Cardiac septum (tissue), 1 donor: ENCODE measurements at regions of chr1 and their contacts with region 1.

Region 1: GRCh38 chr1:42335050-42335808 is at the start of gene FOXJ3:
- DNase-seq: peak; percentile 96
- total RNA-seq, gene FOXJ3: 46.2 TPM

Region 2: DNA sequence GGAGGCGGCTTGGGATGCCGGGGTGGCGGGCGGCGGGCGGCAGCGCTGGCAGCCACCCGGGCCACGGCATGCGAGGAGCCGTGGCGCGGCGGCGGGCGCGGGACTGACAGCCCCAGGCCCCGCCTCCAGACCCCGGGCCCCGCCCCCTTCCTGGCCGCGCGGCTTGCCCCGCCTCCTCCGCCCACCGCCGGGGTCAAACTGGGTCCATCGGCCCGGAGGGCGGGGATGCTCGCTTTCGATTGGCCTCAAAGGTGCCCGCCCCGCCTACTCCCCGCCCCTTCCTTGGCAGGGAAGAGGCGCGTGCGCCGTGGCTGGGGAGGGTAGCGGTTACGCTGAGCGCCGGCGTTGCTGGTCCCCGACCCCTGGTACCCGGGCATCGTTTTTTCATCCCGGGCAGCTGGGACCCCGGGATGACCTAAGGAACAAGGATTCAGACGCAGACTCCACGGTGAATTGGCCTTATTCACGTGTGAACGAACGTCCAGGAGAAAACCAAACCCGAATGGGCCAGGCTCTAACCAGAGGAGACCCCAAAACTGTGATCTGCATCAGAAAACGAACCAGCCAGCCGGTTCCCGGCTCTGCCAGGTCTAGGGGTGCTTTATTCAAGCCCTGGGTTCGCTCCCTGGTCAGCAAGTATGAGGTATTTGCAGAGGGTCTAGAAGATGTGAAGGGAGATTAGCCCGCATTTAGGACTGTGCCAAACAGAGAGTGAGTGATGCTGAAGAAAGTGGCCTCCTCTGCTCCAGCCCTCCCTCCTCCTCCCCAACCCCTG is 299.2 kb before region 1 on chr1:
- intact Hi-C with region 1: loop called (anchors 10 kb)
- DNase-seq: peak; percentile 97

Region 3: GRCh38 chr1:42173155-42173933 is 161.9 kb before region 1 on chr1:
- intact Hi-C with region 1: loop called (anchors 2 kb)
- DNase-seq: peak; percentile 87

Region 4: GRCh38 chr1:42319871-42320484 is 15.3 kb before region 1 on chr1:
- intact Hi-C with region 1: loop called (anchors 2 kb)
- DNase-seq: no peak

Region 5: DNA sequence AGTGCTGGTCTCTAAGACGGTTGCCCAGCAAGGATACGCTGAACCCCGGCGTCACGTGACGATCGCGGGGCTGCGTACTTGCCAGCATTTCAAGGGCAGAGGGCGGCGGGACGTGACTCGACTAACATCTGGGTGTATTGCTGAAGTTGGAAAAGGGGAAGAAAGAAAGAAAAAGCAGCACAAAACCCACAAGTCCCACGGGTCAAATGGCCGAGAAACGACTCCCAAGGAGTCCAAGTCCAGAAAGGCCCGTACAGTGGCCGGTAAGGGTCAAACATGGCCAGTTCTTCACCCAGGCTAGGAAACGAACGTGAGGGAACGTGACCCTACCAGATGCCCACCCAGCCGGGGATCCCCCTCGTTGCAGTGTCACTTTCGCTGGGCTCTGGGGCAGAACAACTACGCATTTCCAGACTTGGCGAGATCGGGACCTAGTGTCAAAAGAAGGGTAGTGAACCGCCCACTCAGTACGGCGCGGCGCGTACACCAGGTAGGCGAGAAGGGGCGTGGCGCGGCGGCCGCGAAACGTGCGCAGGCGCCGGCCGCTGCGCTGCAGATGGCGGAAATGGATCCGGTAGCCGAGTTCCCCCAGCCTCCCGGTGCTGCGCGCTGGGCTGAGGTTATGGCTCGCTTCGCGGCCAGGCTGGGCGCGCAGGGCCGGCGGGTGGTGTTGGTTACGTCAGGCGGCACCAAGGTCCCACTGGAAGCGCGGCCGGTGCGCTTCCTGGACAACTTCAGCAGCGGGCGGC is 121.0 kb after region 1 on chr1 and contains the starts of genes PPCS and ZMYND12:
- intact Hi-C with region 1: loop called (anchors 2 kb)
- DNase-seq: peak; percentile 91
- total RNA-seq, gene PPCS: 44.3 TPM
- total RNA-seq, gene ZMYND12: 1.6 TPM

Region 6: DNA sequence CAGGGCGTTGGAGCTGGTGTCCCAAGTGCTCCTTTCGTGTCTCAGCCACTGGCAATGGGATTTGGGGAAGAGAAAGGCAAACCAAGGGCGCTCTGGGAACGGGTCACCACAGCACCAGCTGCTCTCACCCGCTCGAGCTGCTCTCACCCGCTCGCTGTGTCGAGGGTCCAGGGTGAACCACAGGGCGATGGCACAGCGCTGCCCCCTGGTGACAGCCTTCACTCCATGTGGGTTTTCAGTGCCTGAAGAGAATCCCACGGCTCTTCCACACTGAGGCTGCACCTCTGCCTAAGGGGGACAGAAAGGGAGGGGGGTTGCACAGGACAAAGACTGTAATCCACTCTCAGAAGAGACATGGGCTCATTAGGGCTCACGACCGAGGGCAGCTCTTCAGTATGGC is 411.9 kb after region 1 on chr1:
- intact Hi-C with region 1: loop called (anchors 10 kb)
- DNase-seq: peak; percentile 61